AG04449 (cell line): ENCODE measurements at regions of chr1 and their contacts with region 1.

Region 1: DNA sequence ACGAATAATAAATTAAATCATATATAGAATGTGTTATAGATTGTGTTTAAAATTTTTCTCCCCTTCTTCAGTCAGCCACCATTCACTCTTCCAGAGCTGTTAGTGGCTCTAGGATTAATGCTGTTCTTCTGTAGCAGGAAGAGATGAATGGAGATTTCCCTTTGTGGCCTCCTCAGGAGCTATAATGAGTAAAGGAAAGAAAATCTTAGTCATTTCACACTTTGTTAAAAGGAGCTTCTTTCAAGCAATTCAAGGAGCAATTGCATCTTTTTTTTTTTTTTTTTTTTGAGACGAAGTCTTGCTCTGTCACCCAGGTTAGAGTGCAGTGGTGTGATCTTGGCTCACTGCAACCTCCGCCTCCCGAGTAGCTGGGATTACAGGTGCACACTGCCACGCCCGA is 23.7 kb upstream of the TMCO2 start:
- DNase-seq: no peak
- H3K4me3 ChIP-seq: no peak overlapping the region
- CTCF ChIP-seq: no peak

Region 2: DNA sequence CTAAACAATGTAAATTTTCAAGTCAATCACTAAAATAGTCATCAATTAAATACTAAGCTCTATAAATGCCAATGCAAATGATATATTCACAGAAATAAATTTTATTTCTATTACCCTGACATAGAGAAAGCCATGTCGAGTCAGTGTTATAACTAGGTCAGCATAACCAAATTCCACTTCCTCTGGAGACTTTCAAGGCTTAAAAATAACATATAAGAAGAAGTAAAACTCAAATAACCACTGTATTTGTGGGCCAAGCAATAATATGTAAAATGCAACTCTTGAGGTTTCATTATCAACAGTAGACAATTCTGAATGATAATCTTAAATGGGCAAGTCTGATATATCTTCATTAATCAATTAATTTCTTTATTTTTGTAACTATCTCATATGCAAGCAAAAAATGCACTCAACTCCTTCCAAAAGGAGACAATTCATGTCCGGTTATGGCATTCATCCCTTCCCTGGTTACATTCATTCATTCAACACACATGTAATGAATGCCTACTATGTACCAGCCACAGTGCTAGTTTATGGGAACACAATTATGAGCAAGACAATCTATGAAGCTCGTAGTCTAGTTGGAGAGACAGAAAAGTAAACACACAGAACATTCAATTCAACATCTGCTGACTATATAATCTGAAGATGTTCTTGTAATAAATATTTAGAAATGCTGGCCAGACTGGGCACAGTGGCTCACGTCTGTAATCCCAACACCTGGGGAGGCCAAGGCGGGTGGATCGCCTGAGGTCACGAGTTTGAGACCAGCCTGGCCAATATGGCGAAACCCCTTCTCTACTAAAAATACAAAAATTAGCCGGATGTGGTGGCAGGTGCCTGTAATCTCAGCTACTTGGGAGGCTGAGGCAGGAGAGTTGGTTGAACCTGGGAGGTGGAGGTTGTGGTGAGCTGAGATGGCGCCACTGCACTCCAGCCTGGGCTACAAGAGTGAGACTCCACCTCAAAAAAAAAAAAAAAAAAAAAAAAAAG is 220.6 kb before region 1 on chr1:
- CTCF ChIA-PET with region 1: no interaction called
- POLR2A ChIA-PET with region 1: no interaction called
- DNase-seq: no peak
- H3K4me3 ChIP-seq: no peak overlapping the region
- CTCF ChIP-seq: no peak

Region 3: DNA sequence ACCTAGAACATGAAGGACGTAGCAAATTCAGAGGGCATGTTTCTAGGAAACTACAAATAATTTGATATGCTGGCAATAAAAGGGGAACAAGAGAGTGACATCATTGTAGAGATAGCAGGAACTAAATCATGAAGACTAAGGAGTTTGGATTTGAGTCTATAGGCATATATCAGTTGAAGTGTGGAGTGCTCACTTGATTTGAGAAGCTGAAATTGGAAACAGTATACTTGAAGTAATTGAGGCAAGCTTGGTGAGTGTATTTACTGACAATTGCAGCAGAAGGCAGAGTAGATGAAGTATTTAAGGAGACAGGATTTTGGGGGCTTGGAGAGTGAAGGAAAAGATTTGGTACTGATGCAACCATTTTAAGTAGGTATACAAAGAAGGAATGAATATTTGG is 17.3 kb after region 1 on chr1:
- CTCF ChIA-PET with region 1: interaction called, 17 read pairs
- POLR2A ChIA-PET with region 1: no interaction called
- DNase-seq: no peak
- H3K4me3 ChIP-seq: no peak overlapping the region
- CTCF ChIP-seq: no peak